IMR-90 (cell line): ENCODE measurements at regions of chr1 and their contacts with region 1.

Region 1: DNA sequence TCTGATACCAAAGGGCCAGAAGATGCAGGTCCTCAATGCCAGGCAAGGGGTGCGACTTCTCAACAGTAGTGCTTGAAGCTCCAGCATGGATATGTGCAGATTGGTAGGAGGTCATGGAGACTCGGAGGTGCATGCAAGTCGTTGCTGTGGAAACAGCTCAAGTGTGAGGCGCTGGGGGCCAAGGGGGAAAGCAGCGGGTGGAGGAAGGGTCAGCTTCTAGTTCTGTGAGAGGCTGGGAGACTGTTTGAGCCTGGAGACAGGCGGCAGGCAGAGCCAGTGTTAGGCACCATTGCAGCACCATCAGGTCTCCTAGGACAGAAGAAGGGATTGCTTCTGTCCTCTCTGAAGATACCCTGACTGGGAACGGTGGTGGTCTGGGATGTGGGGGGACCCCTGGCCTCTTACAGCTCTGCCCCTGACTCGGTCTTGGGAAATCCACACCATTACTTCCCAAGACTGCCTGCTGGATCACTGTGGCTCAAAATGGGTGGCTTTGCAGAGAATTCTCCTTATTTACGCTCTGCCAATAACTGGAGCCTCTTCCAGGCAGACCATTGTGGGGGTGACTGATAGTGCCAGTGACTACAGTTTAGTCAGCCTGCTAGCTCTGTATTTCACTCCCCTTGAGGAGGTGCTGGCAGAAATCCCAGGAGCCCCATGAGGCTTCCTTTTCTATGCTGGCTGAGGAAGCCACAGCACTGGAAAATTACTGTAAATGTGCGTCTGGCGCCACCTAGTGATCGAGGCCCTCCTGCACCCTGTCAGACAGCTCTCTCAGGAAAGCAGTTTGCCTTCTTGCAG is 46.3 kb upstream of the VANGL1 start:
- DNase-seq: peak; percentile 96
- ATAC-seq: peak; percentile 96
- H3K4me3 ChIP-seq: no peak overlapping the region
- H3K27ac ChIP-seq: no peak overlapping the region
- H3K4me1 ChIP-seq: 0 out of 2 replicates have a peak, but pooled peaks cover 2% of the 10 kb centered on the region
- H3K27me3 ChIP-seq: no peaks in the 10 kb centered on the region
- CTCF ChIP-seq: peak; percentile 99
- POLR2A ChIP-seq: peak; percentile 61; the same call in 1 of the 2 replicates
- RAD21 ChIP-seq: peak; percentile 98

Region 2: DNA sequence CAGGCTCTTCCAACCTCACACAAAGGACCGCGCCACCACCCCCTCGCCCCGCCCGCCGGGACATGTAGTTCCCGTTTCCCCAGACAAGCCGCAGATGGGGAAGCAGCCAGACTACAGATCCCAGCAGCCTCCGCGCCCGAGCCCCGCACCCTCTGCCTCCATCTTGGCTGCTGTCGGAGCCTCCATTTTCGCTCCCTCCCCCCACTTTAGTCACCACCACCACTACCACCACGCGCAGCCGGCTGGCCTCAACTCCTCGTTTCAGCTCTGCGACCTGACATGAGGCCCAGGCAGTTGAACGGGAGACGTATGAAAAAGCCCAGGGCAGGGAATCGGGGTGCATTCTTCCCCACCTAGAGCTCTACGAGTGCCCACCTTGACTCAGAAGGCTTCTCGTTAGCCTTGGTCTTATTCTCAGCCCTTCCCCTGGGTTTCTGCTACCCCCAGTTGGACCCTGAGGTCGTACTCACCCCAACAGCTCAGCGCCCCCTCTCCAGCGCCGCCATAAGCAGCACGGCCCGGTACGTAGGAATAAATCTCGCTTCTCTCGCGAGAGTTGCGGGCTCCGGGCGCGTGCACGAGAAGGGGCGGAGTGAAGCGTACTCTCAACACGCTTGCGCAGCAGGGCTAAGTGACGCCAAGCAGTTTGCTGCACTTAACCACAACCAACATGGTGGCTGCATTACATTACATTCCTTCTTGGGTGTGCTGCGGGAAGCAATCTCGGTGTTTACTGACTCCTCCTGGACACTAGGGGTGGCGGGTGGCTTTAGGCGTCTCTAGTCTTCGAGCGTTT is 837.8 kb before region 1 on chr1 and contains the start of gene CSDE1:
- CTCF ChIA-PET with region 1: no interaction called
- POLR2A ChIA-PET with region 1: no interaction called
- dilution Hi-C with region 1: no loop called
- in situ Hi-C with region 1: no loop called
- intact Hi-C with region 1: loop called (anchors 1 kb)
- DNase-seq: peak; percentile 99
- ATAC-seq: peak; percentile 93
- H3K4me3 ChIP-seq: peak within 1 kb of the TSS; percentile 67
- H3K27ac ChIP-seq: peak within 1 kb of the TSS; percentile 89
- H3K4me1 ChIP-seq: peaks cover 2% of the 10 kb centered on the region; the same call in 1 of the 2 replicates
- H3K27me3 ChIP-seq: no peaks in the 10 kb centered on the region
- CTCF ChIP-seq: peak; percentile 49
- POLR2A ChIP-seq: peak; percentile 98
- RAD21 ChIP-seq: peak; percentile 49
- total RNA-seq, gene CSDE1: 879 and 2,287 TPM in 2 replicates

Region 3: GRCh38 chr1:114979278-114979891 is 616.1 kb before region 1 on chr1:
- CTCF ChIA-PET with region 1: interaction called, 5 read pairs
- POLR2A ChIA-PET with region 1: no interaction called
- dilution Hi-C with region 1: no loop called
- in situ Hi-C with region 1: loop called (anchors 5 kb)
- intact Hi-C with region 1: loop called (anchors 1 kb)
- DNase-seq: peak; percentile 52
- ATAC-seq: peak; percentile 65; the same call in 1 of the 2 replicates
- H3K4me3 ChIP-seq: no peak overlapping the region
- H3K27ac ChIP-seq: no peak overlapping the region
- H3K4me1 ChIP-seq: no peaks in the 10 kb centered on the region
- H3K27me3 ChIP-seq: no peaks in the 10 kb centered on the region; the same call in 1 of the 2 replicates
- CTCF ChIP-seq: peak; percentile 73
- POLR2A ChIP-seq: no peak
- RAD21 ChIP-seq: peak; percentile 74

Region 4: DNA sequence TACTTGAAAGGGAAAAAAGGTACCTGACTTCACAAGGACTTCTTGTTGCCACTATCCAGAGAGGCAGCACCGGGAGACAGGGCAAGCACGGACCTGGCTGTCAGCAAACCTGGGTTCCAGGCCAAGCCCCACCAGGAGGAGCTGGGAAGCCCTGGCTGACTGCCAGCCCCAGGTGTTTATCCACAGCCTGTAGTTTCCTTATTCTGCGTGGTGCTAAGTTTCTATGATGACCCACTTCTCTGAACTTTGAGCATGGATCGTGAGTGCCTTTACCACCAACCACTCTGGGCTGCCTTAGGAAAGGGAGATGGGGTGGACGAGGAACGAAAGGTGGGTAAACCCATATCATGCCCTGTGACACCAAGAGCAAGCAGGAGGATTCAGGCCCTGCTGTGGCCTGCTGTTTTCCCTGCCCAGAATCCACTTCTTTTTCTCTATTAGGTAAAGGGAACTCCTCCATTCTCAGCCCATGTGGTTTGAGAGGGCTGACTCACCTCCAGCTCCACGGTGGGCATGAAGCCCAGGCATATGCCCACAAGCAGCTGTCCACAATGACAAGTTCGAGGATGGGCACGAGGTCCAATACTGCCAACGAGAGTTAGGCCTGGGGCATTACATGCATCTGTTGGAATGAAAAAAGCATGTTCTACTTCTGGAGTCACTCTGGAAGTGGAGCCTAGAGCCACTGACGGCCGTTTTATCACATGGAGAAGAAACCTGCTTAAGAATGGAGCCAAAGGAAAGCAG is 526.5 kb before region 1 on chr1:
- CTCF ChIA-PET with region 1: no interaction called
- POLR2A ChIA-PET with region 1: no interaction called
- dilution Hi-C with region 1: no loop called
- in situ Hi-C with region 1: no loop called
- intact Hi-C with region 1: no loop called
- DNase-seq: peak; percentile 17
- ATAC-seq: peak; percentile 7; the same call in 1 of the 2 replicates
- H3K4me3 ChIP-seq: no peak overlapping the region
- H3K27ac ChIP-seq: no peak overlapping the region
- H3K4me1 ChIP-seq: no peaks in the 10 kb centered on the region; the same call in 1 of the 2 replicates
- H3K27me3 ChIP-seq: peaks cover 2% of the 10 kb centered on the region; the same call in 1 of the 2 replicates
- CTCF ChIP-seq: no peak
- POLR2A ChIP-seq: no peak
- RAD21 ChIP-seq: no peak

Region 5: GRCh38 chr1:115275212-115275611 is 320.3 kb before region 1 on chr1:
- CTCF ChIA-PET with region 1: no interaction called
- POLR2A ChIA-PET with region 1: no interaction called
- dilution Hi-C with region 1: no loop called
- in situ Hi-C with region 1: no loop called
- intact Hi-C with region 1: loop called (anchors 5 kb)
- DNase-seq: peak; percentile 30
- ATAC-seq: no peak; the same call in 1 of the 2 replicates
- H3K4me3 ChIP-seq: no peak overlapping the region
- H3K27ac ChIP-seq: no peak overlapping the region
- H3K4me1 ChIP-seq: peaks cover 3% of the 10 kb centered on the region; the same call in 1 of the 2 replicates
- H3K27me3 ChIP-seq: no peaks in the 10 kb centered on the region
- CTCF ChIP-seq: peak; percentile 48
- POLR2A ChIP-seq: no peak
- RAD21 ChIP-seq: peak; percentile 49

Region 6: DNA sequence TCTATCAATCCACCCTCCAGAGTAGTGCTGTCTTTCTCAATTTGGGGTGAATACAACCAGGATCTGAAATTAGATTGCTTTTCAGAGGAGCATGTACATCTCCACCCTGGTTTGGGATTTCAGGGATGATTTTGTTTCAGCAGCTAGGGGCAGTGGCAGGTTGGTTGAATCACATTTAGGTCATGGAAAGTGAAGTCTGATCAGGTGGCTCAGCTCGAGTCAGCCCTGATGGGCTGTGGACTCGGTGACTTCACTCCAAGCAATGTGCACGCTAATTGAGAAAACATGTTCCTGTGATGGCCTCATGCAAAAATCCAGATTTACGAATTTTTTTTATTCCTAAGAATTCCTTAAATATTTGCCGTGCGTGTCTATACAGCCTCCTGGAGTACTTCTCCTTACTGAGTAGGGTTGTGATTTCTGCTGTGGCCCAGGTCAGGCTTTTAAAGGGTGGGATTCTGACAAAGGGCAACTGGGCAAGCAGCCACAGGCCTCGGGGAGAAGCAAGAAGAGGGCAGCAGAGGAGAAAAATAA is 264.9 kb before region 1 on chr1:
- CTCF ChIA-PET with region 1: interaction called, 3 read pairs
- POLR2A ChIA-PET with region 1: no interaction called
- dilution Hi-C with region 1: no loop called
- in situ Hi-C with region 1: no loop called
- intact Hi-C with region 1: loop called (anchors 2 kb)
- DNase-seq: peak; percentile 96
- ATAC-seq: peak; percentile 78
- H3K4me3 ChIP-seq: no peak overlapping the region
- H3K27ac ChIP-seq: peak overlapping the region; percentile 88
- H3K4me1 ChIP-seq: peaks cover 22% of the 10 kb centered on the region
- H3K27me3 ChIP-seq: no peaks in the 10 kb centered on the region
- CTCF ChIP-seq: peak; percentile 41
- POLR2A ChIP-seq: 0 out of 2 replicates have a peak, but pooled peaks have one; percentile 47
- RAD21 ChIP-seq: peak; percentile 32; the same call in 1 of the 2 replicates

Region 7: GRCh38 chr1:115545791-115546733 is 49.4 kb before region 1 on chr1:
- CTCF ChIA-PET with region 1: interaction called, 4 read pairs
- POLR2A ChIA-PET with region 1: no interaction called
- dilution Hi-C with region 1: no loop called
- in situ Hi-C with region 1: no loop called
- intact Hi-C with region 1: loop called (anchors 1 kb)
- DNase-seq: peak; percentile 95
- ATAC-seq: peak; percentile 93
- H3K4me3 ChIP-seq: no peak overlapping the region
- H3K27ac ChIP-seq: peak overlapping the region; percentile 80
- H3K4me1 ChIP-seq: peaks cover 15% of the 10 kb centered on the region
- H3K27me3 ChIP-seq: 0 out of 2 replicates have a peak, but pooled peaks cover 2% of the 10 kb centered on the region
- CTCF ChIP-seq: peak; percentile 75
- POLR2A ChIP-seq: peak; percentile 63; the same call in 1 of the 2 replicates
- RAD21 ChIP-seq: peak; percentile 71

Region 8: DNA sequence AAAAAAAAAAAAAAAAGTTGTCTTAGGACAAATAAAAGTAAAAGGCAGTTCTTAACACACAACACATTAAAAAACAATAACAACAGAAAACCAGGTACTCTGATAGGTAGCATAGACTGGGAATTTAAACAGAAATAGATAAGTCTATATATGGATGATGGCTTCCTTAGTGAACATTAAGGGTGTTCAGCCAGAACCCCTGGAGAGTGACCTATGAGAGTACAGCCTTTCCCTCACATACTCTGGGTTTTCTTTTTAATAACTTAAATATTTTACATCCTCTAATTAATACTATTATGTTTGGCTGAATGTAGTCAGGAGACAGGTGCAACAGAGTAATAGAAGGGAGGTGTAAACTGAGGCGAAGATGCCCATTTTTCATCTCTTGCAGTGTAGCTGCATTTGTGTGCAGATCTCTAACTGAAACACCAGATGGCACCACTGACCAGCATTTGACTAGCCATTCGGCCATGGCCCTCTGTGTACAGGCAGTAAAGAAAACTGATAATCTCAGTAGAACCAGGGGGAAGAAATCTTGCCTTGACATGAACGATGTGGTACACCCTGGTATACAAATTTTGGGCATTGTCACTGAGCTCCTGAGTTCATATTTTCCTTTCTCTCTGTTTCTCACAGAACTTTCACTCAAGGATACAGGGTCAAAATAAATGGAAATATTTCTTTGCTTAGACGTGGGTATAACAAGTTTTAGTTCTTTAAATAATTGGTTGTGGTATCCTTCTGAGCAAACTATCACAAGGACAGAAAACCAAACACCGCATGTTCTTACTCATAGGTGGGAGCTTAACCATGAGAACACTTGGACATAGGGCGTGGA is 1472.3 kb after region 1 on chr1:
- CTCF ChIA-PET with region 1: no interaction called
- POLR2A ChIA-PET with region 1: no interaction called
- dilution Hi-C with region 1: no loop called
- in situ Hi-C with region 1: no loop called
- intact Hi-C with region 1: no loop called
- DNase-seq: peak; percentile 70
- ATAC-seq: peak; percentile 99
- H3K4me3 ChIP-seq: no peak overlapping the region
- H3K27ac ChIP-seq: no peak overlapping the region
- H3K4me1 ChIP-seq: no peaks in the 10 kb centered on the region
- H3K27me3 ChIP-seq: no peaks in the 10 kb centered on the region
- CTCF ChIP-seq: peak; percentile 93
- POLR2A ChIP-seq: peak; percentile 45; the same call in 1 of the 2 replicates
- RAD21 ChIP-seq: peak; percentile 100